ENCODE measurements at regions of chr17 and their contacts with region 1.

Region 1: DNA sequence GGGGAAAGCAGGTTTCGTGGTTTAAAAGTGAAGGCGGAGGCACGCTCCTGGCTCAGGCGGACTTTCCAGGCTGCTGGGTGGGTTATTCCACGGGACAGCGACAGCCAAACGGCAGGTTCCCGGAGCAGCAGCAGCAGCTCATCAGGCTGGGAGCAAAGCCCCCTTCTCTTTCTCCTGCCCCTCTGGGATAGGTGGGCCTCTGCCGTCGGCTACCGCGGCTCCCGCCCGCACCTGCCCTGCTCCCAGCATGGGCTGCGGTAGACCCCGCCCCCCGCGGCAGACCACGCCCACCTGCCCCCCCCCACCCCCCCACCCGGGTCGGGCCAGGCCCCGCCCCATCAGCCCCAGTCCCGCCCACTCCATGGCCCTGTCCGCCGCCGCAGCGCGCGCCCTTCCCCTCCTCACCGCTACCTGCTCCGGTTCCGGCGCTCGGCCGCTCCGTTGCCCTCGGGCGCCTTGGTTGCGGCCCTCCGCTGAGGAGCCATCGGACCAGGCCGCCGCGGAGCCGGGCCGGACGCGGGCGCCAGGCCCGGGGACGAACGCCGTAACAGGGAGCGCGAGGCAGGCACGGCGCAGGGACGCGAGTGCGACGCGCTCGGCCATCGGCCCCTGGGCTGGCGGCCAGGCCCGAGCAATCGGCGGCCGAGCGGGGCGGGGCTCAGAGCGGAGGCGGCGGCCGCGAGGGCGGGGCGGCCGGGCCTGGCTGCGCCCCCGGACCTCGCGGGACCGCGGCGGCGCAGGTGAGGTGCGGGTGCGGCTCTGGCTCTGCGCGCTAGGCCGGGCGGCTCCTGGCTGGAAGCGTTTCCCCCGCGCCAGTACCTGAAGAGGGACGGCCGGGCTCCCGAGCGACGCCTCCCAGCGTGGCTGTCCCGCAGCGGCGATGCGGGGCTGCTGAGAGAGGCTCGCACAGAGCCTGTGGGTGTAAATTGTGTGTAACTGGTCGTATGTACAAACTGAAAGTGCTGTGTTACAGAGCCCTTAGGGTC is at the starts of genes HEXD and OGFOD3:
- DNase-seq: peak; percentile 89
- H3K4me3 ChIP-seq: peak within 1 kb of the TSS; percentile 88 to 97 (median 88)
- H3K27ac ChIP-seq: peak within 1 kb of the TSS; percentile 71
- H3K4me1 ChIP-seq: peaks cover 13% of the 10 kb centered on the region
- H3K27me3 ChIP-seq: no peaks in the 10 kb centered on the region
- CTCF ChIP-seq: no peak
- total RNA-seq, gene HEXD: 6.3 to 13.0 TPM
- total RNA-seq, gene OGFOD3: 18.5 to 25.6 TPM

Region 2: DNA sequence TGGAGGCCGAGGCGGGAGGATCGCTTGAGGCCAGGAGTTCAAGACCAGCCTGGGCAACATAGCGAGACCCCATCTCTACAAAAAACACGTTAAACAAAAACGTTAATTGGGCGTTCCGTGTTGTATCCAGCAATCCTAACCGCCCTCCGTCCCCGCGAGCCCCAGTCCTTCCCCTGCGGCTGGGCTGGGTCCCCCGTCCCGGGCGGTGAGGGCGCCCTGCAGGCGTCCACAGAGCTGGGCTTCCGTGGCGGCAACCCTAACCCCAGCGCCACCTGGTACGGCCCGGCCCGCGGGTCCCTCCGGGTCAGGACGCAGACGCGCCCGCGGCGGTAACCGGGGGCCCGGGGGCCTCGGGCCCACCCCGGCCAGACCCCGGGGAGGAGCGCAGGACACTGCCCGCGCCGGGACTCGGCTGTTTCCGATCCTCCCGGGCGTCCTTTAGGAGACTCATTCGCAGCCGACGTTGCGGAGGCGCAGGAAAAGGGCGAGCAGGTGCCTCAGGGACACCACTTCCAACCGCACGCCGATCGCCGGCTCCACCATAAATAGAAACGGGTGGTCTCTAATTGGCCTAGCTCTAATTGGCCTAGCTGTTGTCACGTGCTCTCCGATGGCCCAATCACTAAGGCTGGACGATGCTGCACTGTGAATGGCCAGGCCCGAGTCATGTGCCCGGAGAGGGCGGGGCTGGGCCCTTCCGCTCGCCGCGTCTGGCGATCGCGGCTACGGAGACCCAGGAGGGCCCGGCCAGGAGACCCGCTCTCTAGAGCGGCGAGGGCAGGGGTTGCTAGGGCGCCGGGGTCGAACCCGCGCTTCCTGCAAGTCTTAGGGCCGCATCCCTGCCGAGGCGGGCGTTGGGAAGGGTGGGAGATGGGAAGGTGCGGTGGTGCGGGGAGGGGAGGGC is 125.8 kb before region 1 on chr17:
- CTCF ChIA-PET with region 1: no interaction called
- dilution Hi-C with region 1: no loop called
- in situ Hi-C with region 1: no loop called
- intact Hi-C with region 1: no loop called
- DNase-seq: peak; percentile 96
- H3K4me3 ChIP-seq: peak overlapping the region; percentile 70 to 97 (median 71)
- H3K27ac ChIP-seq: peak overlapping the region; percentile 76
- H3K4me1 ChIP-seq: peaks cover 28% of the 10 kb centered on the region
- H3K27me3 ChIP-seq: no peaks in the 10 kb centered on the region
- CTCF ChIP-seq: no peak

Region 3: DNA sequence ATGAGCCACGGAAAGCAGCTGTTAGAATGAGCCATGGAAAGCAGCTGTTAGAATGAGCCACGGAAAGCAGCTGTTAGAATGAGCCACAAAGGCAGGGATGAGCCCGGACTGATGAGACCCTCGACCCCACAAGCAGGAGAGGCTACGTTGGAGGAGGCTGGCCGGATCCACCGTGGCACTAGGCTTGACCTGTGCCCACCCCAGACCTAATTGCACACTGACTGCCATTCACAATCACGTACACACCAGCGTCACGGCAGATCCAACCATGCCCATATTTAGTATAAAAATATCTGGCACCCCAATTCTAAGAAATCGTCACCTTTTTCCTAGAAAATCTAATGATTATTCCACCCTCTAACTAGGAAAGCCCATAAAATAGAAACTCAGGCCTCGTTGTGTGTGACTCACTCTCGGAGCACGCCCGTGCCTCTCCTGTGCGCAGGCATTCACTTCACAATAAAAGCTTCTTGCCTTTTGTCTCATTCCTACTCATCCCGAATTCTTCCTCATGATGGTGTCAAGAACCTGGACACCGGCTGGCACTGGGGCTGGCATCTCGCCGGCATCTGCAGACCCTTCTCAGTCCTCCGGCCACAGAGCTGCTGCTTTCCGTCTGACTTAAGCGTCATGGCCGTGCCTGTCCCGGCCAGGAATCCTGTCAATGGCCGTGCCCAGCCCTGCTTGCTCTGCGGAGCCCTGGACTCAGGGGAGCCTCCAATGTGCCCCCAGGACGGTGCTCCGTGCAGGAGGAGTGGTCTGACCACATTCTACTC is 79.2 kb before region 1 on chr17:
- CTCF ChIA-PET with region 1: no interaction called
- dilution Hi-C with region 1: loop called (anchors 5 kb)
- in situ Hi-C with region 1: no loop called
- intact Hi-C with region 1: no loop called
- DNase-seq: peak; percentile 82
- H3K4me3 ChIP-seq: peak overlapping the region; percentile 6 to 39 (median 34)
- H3K27ac ChIP-seq: peak overlapping the region; percentile 62
- H3K4me1 ChIP-seq: peaks cover 25% of the 10 kb centered on the region
- H3K27me3 ChIP-seq: no peaks in the 10 kb centered on the region
- CTCF ChIP-seq: no peak

Region 4: DNA sequence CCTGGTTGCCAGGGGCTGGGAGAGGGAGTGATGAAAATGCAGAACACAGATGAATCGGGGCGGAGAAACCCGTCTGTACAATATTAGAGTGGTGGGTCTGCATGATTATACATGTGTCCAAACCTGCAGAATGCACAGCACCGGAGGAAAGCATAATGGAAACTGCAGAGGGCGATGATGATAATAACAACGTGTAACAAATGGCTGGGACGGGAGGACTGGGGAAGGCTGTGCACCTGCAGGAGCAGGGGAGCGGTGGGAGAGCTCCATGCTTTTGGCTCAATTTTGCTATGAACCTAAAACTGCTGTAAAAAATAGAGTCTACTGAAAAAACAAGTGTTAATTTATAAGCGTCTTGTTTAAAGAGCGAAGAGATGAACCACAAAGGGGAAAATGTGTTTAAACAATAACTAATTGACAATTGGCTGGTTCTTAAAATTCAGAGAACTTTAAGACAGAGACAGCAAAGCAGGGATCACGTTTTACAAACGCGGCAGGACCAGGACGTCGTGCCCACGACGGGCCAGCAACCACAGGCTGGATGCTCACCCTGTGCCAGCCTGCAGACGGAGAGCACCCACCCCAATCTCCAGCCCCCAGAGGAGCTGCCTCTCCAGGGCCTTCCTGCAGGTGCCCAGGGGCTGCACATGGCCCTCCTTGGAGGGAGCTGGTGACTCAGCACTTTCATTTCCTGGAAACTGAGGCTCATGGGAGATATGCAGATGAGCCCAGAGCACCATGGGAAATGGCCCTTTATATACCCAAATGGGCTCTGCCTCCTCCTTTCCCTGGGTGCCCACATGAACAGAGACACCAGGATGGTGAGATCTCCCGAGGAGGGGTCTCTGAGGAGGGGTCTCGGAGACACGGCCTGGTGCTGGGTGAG is 59.6 kb before region 1 on chr17 and contains the start of gene TEX19:
- CTCF ChIA-PET with region 1: no interaction called
- dilution Hi-C with region 1: loop called (anchors 5 kb)
- in situ Hi-C with region 1: loop called in 1 of 2 experiments (anchors 10 kb)
- intact Hi-C with region 1: no loop called
- DNase-seq: no peak
- H3K4me3 ChIP-seq: no peak within 1 kb of the TSS
- H3K27ac ChIP-seq: no peak within 1 kb of the TSS
- H3K4me1 ChIP-seq: peaks cover 16% of the 10 kb centered on the region
- H3K27me3 ChIP-seq: peaks cover 1% of the 10 kb centered on the region
- CTCF ChIP-seq: no peak
- total RNA-seq, gene TEX19: not detected

Region 5: GRCh38 chr17:82457997-82458864 is 39.9 kb after region 1 on chr17 and contains the start of gene NARF:
- CTCF ChIA-PET with region 1: no interaction called
- dilution Hi-C with region 1: loop called (anchors 5 kb)
- in situ Hi-C with region 1: no loop called
- intact Hi-C with region 1: loop called (anchors 2 kb)
- DNase-seq: peak; percentile 99
- H3K4me3 ChIP-seq: peak within 1 kb of the TSS; percentile 43 to 88 (median 79)
- H3K27ac ChIP-seq: peak within 1 kb of the TSS; percentile 81
- H3K4me1 ChIP-seq: peaks cover 7% of the 10 kb centered on the region
- H3K27me3 ChIP-seq: no peaks in the 10 kb centered on the region
- CTCF ChIP-seq: no peak
- total RNA-seq, gene NARF: 25.0 to 31.5 TPM

Region 6: DNA sequence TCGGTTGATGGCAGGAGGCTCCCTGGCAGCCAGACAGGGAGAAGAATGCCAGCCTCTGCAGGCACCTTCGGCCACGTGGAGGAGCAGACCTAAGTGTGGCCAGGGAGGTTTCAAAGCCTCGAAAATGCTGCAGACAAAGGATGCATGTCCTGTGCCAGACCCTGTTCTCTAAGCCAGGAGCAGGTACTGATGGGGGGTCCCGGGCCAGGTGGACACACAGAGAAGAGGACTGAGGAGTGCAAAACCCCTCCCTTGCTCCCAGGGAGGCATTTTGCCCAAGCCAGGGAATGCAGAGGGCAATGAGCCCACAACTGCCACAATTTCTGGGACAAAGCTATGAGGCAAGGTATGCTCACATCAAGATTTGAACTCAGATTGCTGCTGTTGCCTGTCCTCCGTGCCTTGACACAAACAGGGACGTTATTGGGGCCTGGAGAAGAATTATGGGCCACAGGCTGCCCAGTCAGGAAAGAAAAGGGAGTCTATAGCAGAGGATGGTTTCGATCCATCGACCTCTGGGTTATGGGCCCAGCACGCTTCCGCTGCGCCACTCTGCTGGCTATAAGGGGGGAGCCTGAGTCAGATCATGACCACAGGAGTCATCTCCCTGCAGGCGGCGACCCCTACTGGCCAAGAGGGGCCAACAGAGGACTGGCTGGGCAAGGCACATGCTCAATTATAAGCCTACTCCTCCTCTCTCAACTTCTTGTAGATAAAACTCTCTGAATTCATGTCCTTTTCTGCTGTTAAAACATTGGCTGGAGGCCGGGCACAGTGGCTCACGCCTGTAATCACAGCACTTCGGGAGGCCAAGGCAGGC is 76.2 kb after region 1 on chr17:
- CTCF ChIA-PET with region 1: no interaction called
- dilution Hi-C with region 1: no loop called
- in situ Hi-C with region 1: no loop called
- intact Hi-C with region 1: loop called (anchors 2 kb)
- DNase-seq: peak; percentile 95
- H3K4me3 ChIP-seq: no peak overlapping the region
- H3K27ac ChIP-seq: no peak overlapping the region
- H3K4me1 ChIP-seq: peaks cover 24% of the 10 kb centered on the region
- H3K27me3 ChIP-seq: no peaks in the 10 kb centered on the region
- CTCF ChIP-seq: peak; percentile 85 to 95

Region 7: DNA sequence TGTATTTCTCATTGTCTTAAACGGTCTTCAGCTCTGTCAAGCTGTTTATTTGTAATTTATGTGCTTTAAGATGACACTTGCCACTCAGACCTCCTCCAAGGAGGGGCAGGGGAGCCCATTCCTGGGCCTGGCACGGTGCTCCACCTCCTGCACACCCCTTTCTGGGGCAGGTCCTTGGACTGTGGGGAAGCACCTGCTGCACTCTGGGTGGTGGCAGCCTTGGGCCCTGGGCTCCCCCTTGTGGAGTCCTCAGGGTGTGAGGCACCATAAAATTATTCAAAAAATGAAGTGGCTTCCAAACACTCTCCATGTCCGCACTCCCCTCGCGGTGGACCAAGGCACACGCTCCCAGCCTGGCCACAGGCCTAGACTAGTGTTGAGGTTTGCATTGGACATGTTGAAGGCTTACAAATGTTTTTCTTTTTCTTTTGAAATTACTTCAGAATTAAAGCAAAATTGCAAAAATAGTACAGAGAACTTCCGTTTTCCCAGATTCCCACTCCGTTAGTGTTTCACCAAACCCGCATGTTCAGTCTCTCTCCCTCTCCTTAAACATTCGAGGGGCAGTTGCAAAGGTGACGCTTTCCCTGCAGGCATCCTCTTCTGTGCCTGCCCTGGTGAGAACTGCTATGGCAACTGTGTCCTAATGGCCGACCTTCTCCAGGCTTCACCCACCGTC is 133.6 kb after region 1 on chr17:
- CTCF ChIA-PET with region 1: no interaction called
- dilution Hi-C with region 1: no loop called
- in situ Hi-C with region 1: no loop called
- intact Hi-C with region 1: loop called (anchors 2 kb)
- DNase-seq: peak; percentile 74
- H3K4me3 ChIP-seq: no peak overlapping the region
- H3K27ac ChIP-seq: no peak overlapping the region
- H3K4me1 ChIP-seq: peaks cover 12% of the 10 kb centered on the region
- H3K27me3 ChIP-seq: no peaks in the 10 kb centered on the region
- CTCF ChIP-seq: peak; percentile 63 to 86

Measured in mammary epithelial cell (primary cell).